GM10248 (cell line): ENCODE measurements at regions of chr5 and their contacts with region 1.

Region 1: GRCh38 chr5:160105686-160106360 is 13.4 kb downstream of the PWWP2A start:
- DNase-seq: peak; percentile 50
- CTCF ChIP-seq: no peak

Region 2: DNA sequence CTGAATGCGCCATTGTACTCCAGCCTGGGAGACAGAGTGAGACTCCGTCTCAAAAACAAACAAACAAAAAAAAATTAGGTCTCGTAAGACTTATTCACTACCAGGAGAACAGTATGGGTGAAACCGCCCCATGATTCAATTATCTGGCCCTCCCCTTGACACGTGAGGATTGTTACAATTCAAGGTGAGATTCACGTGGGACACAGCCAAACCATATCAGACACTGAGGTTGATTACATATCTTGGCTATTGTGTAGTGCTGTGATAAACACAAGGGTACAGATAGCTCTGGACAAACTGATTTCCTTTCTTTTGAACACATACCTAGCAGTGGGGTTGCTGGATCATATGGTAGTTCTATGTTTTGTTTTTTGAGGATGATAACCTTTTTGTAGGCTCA is 55.8 kb after region 1 on chr5:
- CTCF ChIA-PET with region 1: no interaction called
- POLR2A ChIA-PET with region 1: interaction called, 10 read pairs
- DNase-seq: no peak
- CTCF ChIP-seq: no peak